ENCODE measurements at regions of chr22 and their contacts with region 1.

Region 1: GRCh38 chr22:20156611-20157429 is 6.0 kb upstream of the CCDC188 start:
- DNase-seq: peak; percentile 95
- ATAC-seq: peak; percentile 74

Region 2: GRCh38 chr22:20130739-20131596 is 25.9 kb before region 1 on chr22:
- intact Hi-C with region 1: no loop called
- DNase-seq: peak; percentile 91
- ATAC-seq: peak; percentile 88

Region 3: GRCh38 chr22:20141186-20142077 is 15.4 kb before region 1 on chr22:
- intact Hi-C with region 1: no loop called
- DNase-seq: no peak
- ATAC-seq: peak; percentile 27

Region 4: DNA sequence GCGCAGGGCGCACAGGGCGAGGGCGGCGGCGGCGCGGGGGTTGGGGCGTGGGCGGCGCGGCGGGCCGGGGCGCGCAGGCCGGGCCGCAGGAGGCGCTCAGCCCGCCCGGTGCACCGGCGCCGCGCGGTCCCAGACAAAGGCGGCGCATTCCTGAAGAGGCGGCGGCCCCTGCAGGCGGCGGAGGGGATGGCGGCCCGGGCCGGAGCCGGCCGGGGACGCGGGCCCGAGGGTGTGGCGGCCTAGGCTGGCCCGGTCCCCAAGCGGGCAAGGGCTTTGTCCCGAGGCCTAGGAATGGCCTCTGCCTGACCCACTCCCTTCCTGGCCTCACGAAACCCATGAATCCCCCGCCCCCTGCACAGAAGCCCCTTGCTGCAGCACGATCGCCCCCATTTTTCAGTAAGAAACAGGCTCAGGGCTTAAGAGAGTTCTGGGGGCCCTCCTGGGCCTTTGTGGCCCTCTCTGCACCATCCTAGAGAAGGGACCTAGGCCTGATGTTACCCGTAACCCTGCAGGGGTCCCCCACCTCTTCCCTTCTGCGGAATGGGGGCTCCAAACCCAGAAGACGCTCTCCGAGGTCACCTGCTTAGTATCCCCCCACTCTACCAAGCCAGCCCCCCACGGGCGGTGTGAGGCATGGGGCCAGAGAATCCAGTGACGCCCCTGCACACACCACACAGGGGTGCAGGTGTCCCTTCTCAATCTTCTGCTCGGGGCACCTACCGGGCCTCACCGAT is 111.6 kb after region 1 on chr22 and contains the start of gene RTN4R:
- intact Hi-C with region 1: loop called (anchors 5 kb)
- DNase-seq: no peak
- ATAC-seq: peak; percentile 70
- total RNA-seq, gene RTN4R: 4.4 TPM

Region 5: GRCh38 chr22:20279662-20280134 is 122.9 kb after region 1 on chr22:
- intact Hi-C with region 1: loop called (anchors 2 kb)
- DNase-seq: no peak
- ATAC-seq: no peak

Region 6: DNA sequence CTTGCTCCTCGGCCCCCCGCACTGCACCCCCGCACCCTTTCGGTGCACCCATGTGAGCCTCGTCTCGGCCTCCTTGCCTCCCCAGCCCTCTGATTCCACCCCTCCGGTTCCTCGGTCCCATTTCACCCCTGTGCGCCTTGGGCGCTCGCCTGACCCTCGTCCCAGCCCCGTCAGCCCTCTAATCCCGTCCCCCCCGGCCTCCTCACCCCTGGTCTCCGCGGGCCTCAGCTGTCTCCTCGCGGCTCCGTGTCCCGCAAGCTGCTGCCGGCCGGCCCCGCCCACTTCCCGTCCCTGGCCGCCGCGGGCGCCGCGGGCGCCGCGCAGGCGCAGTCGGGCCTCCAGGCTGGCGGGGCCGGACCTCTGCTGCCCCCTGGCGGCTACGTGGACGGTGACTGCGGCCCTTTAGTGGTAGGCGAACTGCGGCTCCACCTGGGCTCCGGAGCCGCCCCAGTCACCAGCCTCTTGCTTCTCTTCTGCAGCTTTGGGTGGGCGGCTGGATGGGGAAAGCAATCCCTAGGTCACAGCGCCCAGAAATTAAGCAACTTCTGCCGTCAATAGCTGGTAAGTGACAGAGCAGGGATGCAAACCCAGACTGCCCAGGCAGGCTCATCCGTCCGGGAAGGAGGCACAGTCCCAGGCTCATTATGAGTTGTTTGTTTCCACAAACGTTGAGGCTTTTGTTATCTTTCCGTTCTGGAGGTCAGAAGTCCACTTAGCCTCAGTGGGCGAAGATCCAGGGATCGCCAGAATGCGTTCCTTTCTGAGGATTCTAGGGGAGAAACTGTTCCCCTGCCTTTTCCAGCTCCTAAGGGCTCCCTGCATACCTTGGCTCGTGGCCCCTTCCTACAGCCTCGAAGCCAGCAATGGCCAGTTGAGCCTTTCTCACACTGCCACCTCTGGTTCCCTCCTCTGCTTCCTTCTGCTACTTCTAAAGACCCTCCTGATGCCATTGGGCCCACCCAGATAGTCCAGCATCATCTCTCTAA is 1796.1 kb after region 1 on chr22 and contains the start of gene PPM1F:
- intact Hi-C with region 1: no loop called
- DNase-seq: peak; percentile 93
- ATAC-seq: peak; percentile 85
- total RNA-seq, gene PPM1F: 95.5 TPM